ENCODE measurements at regions of chr1 and their contacts with region 1.

Region 1: GRCh38 chr1:152047730-152048402 is 11.1 kb upstream of the S100A11 start:
- DNase-seq: peak; percentile 95
- ATAC-seq: peak; percentile 98
- H3K4me3 ChIP-seq: peak overlapping the region; percentile 41 to 60 (median 47)
- H3K27ac ChIP-seq: peak overlapping the region; percentile 67
- H3K4me1 ChIP-seq: peaks cover 17% of the 10 kb centered on the region
- H3K27me3 ChIP-seq: peaks cover 1 to 6% of the 10 kb centered on the region in 2 experiments; a peak in 1 of 5 replicates
- CTCF ChIP-seq: peak; percentile 77
- EP300 ChIP-seq: 0 out of 4 replicates have a peak, but pooled peaks of 1 of the 2 experiments have one; percentile 27
- POLR2A ChIP-seq: peak; percentile 66 to 68
- RAD21 ChIP-seq: no peak

Region 2: DNA sequence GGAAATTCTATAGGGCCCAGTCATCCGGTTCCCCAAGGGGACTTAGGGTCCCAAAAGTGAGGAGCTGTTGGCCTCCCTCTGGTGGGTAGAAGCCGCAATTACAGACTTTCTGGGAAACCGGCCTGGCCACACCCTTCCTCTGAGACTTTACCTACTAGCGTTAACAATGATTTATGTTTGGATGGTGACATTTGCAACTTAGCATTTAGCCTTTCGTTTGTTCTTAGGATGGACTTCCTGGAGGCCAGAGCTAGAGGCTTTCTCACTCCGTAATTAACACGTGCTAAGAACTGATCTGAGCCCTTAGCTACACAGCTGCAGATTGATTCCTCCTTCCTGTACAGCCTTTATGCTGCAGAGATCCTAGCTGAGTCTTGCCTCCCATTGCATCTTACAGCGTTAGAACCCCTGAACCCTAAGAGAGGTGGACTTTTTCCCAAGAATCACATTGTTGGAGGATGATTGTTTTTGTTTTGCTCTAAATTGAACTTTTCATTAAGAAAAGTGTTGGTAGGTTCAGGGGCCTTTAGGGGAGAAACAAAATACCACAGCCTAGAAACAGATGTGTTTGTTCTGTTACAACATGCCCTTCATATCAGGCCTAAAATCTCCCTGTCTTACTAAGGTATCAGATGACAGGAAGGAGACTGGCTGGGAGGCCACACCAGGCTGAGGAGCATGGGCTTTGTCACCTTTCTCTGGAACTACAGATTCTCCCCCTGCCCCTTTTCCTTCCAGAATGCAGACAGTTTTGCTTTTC is 13.0 kb before region 1 on chr1:
- CTCF ChIA-PET with region 1: no interaction called
- POLR2A ChIA-PET with region 1: interaction called, 30 read pairs
- in situ Hi-C with region 1: no loop called
- intact Hi-C with region 1: no loop called
- DNase-seq: peak; percentile 61
- ATAC-seq: peak; percentile 72
- H3K4me3 ChIP-seq: peak overlapping the region; percentile 38 to 59 (median 53)
- H3K27ac ChIP-seq: no peak overlapping the region
- H3K4me1 ChIP-seq: peaks cover 35% of the 10 kb centered on the region
- H3K27me3 ChIP-seq: peaks cover 0 to 23% of the 10 kb centered on the region in 2 experiments; a peak in 1 of 5 replicates
- CTCF ChIP-seq: peak; percentile 53
- EP300 ChIP-seq: no peak
- POLR2A ChIP-seq: no peak
- RAD21 ChIP-seq: no peak

Region 3: GRCh38 chr1:152189657-152190442 is 142.0 kb after region 1 on chr1:
- CTCF ChIA-PET with region 1: interaction called, 26 read pairs
- POLR2A ChIA-PET with region 1: no interaction called
- in situ Hi-C with region 1: loop called (anchors 5 kb)
- intact Hi-C with region 1: loop called (anchors 1 kb)
- DNase-seq: peak; percentile 31
- ATAC-seq: peak; percentile 68
- H3K4me3 ChIP-seq: no peak overlapping the region
- H3K27ac ChIP-seq: no peak overlapping the region
- H3K4me1 ChIP-seq: no peaks in the 10 kb centered on the region
- H3K27me3 ChIP-seq: no peaks in the 10 kb centered on the region; a peak in 1 of 5 replicates
- CTCF ChIP-seq: peak; percentile 66
- EP300 ChIP-seq: no peak
- POLR2A ChIP-seq: no peak
- RAD21 ChIP-seq: no peak

Region 4: GRCh38 chr1:152347116-152347728 is 299.4 kb after region 1 on chr1:
- CTCF ChIA-PET with region 1: no interaction called
- POLR2A ChIA-PET with region 1: no interaction called
- in situ Hi-C with region 1: no loop called
- intact Hi-C with region 1: loop called (anchors 10 kb)
- DNase-seq: peak; percentile 50
- ATAC-seq: peak; percentile 46; the same call in 2 of the 3 replicates
- H3K4me3 ChIP-seq: no peak overlapping the region
- H3K27ac ChIP-seq: no peak overlapping the region
- H3K4me1 ChIP-seq: no peaks in the 10 kb centered on the region
- H3K27me3 ChIP-seq: no peaks in the 10 kb centered on the region
- CTCF ChIP-seq: peak; percentile 70
- EP300 ChIP-seq: no peak
- POLR2A ChIP-seq: no peak
- RAD21 ChIP-seq: no peak

Region 5: DNA sequence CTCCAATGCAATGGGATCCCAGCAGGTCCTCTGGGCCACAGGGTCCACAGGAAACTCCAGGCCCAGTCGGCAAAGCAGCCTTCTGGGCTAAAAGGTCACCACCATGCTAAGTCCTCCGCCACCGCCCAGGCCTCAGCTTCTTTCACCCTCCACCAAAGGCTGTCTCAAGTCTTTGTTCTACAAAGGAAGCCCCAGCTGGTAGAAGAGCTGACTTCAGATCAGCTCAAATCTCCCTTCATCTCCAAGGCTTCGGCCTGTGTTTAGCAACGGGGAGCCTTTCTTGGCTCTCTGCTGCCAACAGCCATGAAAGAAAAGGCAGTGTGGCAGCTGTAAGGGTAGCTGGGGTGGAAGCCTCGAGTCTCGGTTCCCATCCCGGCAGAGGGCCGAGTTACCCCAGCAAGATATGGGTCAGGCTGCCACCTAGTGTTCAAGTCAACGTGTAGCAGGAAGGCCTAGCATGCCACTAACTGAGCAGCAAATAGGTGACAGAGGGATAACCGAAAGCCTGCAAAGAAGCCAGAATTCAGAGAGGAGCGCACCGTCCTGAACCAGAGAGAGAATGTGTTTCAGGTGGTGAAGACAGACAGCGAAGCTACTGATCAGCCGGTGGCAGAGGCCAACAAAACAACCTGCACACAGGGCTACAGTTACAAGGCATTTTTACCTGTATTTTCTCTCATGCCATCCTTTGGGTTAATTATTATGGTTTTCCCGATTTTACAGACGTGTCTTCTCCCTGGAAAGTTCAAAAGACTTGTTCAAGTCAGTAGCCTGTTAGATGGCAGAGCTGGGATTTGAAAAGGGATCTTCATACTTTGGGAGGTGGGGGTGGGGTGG is 393.0 kb after region 1 on chr1:
- CTCF ChIA-PET with region 1: interaction called, 5 read pairs
- POLR2A ChIA-PET with region 1: no interaction called
- in situ Hi-C with region 1: loop called (anchors 10 kb)
- intact Hi-C with region 1: no loop called
- DNase-seq: peak; percentile 54
- ATAC-seq: peak; percentile 99
- H3K4me3 ChIP-seq: no peak overlapping the region
- H3K27ac ChIP-seq: no peak overlapping the region
- H3K4me1 ChIP-seq: no peaks in the 10 kb centered on the region
- H3K27me3 ChIP-seq: peaks cover 0 to 4% of the 10 kb centered on the region in 2 experiments; a peak in 2 of 5 replicates
- CTCF ChIP-seq: peak; percentile 88
- EP300 ChIP-seq: no peak
- POLR2A ChIP-seq: no peak
- RAD21 ChIP-seq: peak; percentile 64

Region 6: DNA sequence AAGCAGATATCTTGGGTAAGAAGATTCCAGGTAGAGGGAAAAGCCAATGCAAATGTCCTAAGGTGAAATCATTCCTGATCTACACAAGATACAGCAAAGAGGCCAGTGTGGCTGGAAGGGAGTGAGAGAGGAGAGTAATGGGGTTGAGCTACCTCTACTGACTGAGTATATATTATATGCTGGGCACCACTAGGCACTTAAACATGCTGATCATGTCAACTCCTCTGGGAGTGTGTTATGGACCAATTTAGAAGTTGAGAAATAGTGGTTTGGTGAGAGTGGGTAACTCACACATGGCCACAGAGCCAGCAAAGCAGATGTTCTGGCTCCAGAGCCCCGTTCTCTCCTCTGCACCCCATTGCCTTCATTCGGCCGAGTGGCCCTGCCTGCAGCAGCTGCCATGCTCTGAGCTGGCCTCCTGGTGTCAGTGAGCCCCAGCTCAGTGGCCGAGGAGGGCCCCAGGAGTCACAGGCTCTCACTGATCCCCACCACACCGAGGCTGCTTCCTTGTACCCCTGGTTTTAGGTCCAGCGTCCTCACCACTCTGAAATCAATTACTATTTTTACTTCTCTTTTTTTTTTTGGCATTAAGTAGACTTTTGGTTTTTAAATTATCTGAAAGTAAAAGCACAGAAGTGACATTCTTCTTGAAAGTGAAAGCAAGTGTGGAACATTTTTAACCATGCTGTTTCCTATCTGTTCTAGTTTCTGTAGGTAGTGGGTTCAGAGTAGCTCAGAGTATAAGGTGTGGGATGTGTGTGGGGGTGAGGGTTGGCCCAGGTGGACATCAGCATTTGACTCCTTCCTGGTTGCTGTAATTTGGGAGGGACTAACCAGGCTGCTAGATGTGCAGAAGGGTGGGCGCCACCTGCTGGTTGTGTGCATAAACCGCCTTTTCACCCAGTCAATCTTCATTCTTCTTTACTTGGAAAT is 412.0 kb after region 1 on chr1:
- CTCF ChIA-PET with region 1: no interaction called
- POLR2A ChIA-PET with region 1: no interaction called
- in situ Hi-C with region 1: no loop called
- intact Hi-C with region 1: loop called (anchors 2 kb)
- DNase-seq: peak; percentile 51
- ATAC-seq: peak; percentile 95
- H3K4me3 ChIP-seq: peak overlapping the region; percentile 37 to 40 (median 40); a peak in 5 of 6 replicates
- H3K27ac ChIP-seq: no peak overlapping the region
- H3K4me1 ChIP-seq: no peaks in the 10 kb centered on the region
- H3K27me3 ChIP-seq: no peaks in the 10 kb centered on the region
- CTCF ChIP-seq: peak; percentile 72
- EP300 ChIP-seq: no peak
- POLR2A ChIP-seq: no peak
- RAD21 ChIP-seq: no peak

Measured in HepG2 (cell line).